ENCODE measurements at regions of chr6 and their contacts with region 1.

Region 1: GRCh38 chr6:150016324-150017185 is 8.8 kb downstream of the RAET1L start:
- H3K4me3 Mint-ChIP-seq: no peak overlapping the region
- H3K27ac Mint-ChIP-seq: no peak overlapping the region
- H3K4me1 Mint-ChIP-seq: peaks cover 14% of the 10 kb centered on the region
- H3K27me3 Mint-ChIP-seq: peaks cover 74% of the 10 kb centered on the region

Region 2: DNA sequence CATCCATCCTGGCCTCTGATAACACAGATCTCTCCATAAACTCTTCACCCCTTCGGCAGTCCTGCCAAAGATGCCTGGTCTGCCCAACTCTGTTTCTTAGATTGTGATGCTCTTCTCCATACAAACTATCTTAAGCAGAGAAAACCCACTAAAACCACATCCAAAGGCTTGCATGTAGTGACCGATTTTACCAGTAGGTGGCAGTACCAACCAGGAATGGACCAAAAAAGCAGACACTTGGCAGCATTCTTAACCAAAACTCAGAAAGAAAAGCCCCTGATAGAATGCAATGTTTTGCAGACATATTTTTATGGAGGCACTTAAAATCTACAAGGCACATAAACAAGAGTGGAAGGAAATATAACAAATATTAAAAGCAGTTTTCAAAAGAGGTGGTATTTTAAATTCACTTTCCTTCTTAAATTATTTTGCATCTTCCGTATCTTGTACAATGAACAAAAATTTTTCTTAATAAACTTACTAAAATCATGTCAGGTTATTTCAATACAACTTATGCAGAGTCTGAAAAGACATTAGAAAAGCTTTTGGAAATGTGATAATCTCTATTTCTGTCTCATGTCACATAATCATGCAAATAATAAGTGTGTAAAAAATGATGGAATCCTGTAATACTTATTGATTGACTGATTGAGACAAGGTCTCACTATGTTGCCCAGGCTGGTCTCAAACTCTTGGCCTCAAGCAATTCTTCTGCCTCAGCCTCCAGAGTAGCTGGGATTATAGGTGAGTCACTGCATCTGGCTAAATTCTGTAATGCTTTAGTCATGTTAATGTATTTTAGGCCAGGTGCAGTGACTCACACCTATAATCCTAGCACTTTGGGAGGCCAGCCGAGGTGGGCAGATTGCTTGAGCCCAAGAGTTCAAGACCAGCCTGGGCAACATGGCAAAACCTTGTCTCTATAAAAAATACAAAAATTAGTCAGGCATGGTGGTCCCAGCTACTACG is 181.8 kb before region 1 on chr6:
- intact Hi-C with region 1: loop called (anchors 2 kb)
- H3K4me3 Mint-ChIP-seq: no peak overlapping the region
- H3K27ac Mint-ChIP-seq: no peak overlapping the region
- H3K4me1 Mint-ChIP-seq: no peaks in the 10 kb centered on the region
- H3K27me3 Mint-ChIP-seq: no peaks in the 10 kb centered on the region

Region 3: DNA sequence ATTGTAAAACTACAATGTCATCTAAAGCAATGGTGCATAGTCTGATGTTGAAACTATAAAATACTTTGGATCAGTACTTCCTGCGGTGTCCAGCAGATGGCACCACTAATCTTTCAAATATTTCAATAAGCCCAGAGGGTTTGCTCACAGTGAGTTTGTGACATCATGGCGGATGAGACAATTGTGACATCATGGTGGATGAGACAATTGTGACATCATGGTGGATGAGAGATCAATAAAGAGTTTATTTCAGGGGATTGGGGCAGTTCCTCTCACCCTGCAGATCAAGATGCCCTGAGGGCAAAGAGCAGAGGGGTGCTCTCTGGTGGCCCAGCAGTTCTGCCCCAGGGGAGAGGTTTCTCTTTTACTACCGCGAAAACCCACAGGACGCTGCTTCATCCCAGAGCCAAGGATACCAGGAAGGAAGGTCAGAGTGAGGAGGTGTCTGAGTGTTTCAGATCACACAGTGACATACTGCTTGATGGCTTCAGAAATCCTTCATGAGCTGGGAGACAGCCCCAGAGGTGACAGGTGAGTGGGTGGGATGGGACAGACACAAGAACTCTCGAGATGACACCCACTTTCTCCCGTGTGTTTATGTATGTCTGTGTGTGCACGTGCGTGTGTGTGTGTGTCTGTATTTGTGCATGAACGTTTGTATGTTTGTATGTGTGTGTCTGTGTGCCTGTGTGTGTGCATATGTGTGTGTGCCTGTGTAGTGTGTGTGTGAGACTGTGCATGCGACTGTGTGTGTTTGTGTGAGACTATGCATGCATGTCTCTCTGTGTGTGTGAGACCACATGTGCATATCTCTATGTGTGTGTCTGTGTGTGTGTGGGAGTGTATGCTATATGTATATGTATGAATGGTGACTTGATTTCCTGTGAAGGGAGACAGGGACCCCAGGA is 82.1 kb before region 1 on chr6:
- intact Hi-C with region 1: loop called (anchors 1 kb)
- H3K4me3 Mint-ChIP-seq: no peak overlapping the region
- H3K27ac Mint-ChIP-seq: no peak overlapping the region
- H3K4me1 Mint-ChIP-seq: peaks cover 15% of the 10 kb centered on the region
- H3K27me3 Mint-ChIP-seq: peaks cover 87% of the 10 kb centered on the region

Region 4: DNA sequence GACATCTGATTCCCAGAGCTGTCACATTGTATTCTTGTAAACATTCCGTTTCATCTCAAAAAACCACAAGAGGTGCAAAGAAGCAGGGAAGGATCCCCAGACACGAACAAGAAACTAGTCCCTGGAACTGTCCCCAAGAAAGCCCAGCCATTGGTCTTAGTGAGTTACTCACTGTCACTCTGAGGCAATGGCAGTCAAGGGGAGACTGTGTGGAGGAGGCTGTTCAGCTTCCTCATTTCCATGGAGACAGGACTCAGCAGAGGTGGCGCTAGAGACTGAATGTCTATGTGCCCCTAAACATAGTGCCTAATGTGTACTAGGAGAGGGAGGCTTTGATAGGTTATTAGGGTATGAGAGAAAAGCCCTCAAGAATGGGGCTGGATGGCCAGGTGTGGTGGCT is 41.7 kb before region 1 on chr6:
- intact Hi-C with region 1: no loop called
- H3K4me3 Mint-ChIP-seq: no peak overlapping the region
- H3K27ac Mint-ChIP-seq: no peak overlapping the region
- H3K4me1 Mint-ChIP-seq: no peaks in the 10 kb centered on the region
- H3K27me3 Mint-ChIP-seq: peaks cover 81% of the 10 kb centered on the region